ENCODE measurements at regions of chr2 and their contacts with region 1.

Region 1: GRCh38 chr2:231900486-231900942 is 25.7 kb downstream of the NPPC start:
- DNase-seq: peak; percentile 77 to 81
- ATAC-seq: peak; percentile 74 to 88 (median 86)
- H3K4me3 ChIP-seq: no peak overlapping the region
- H3K27ac ChIP-seq: no peak overlapping the region
- H3K4me1 ChIP-seq: no peaks in the 10 kb centered on the region
- H3K27me3 ChIP-seq: peaks cover 0 to 3% (median 0%) of the 10 kb centered on the region in 3 donors
- CTCF ChIP-seq: peak; percentile 67

Region 2: GRCh38 chr2:232142049-232142448 is 241.5 kb after region 1 on chr2:
- intact Hi-C with region 1: loop called in 1 of 2 experiments (anchors 5 kb)
- DNase-seq: no peak
- ATAC-seq: peak; percentile 52 to 75 (median 54)
- H3K4me3 ChIP-seq: no peak overlapping the region
- H3K27ac ChIP-seq: no peak overlapping the region
- H3K4me1 ChIP-seq: peaks cover 5% of the 10 kb centered on the region
- H3K27me3 ChIP-seq: no peaks in the 10 kb centered on the region
- CTCF ChIP-seq: peak; percentile 67

Region 3: DNA sequence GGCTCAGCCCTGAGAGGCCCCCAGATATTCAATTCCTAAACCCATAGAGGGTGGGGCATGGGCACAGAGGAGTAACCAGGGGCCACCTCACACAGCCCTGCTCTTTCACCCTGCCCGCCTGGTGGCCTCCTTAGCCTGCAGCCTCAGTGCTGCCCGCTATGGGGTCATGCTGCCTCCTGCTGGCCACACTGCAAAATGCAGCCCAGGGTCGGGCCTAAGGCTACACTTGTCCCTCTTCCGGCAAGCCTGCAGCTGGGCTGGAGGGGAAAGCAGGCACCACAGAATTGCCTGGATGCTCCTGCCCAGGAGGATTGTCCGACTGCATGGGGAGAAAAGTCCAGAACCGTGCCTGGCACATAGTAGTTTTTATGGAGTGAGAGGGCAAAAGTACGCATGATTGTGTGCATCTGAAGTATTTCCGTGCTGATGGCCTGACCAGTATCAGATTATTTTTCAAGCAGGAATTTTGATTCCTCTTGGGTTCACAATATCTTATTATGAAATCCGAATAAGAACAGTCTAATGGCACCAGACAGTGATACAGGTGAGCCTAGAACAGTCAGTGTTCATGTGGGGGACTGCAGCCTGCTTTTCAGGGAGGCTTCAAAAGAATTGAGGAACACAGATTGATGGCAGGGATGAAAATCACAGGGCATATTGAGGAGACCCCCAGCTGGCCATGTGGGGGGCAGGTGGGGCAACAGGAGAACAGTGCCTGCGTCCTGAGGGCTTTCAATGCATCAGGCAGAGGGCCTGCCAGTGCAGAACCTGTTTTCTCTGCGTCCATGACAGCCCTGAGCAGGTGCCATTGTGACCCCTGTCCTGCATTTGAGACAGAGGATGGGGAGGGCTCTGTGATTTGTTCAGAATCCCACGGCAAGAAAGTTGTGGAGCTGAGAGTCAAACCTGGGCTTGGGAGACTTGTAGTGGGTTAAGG is 426.9 kb after region 1 on chr2:
- intact Hi-C with region 1: loop called in 1 of 2 experiments (anchors 5 kb)
- DNase-seq: peak; percentile 77 to 85
- ATAC-seq: peak; percentile 55 to 77 (median 75)
- H3K4me3 ChIP-seq: no peak overlapping the region
- H3K27ac ChIP-seq: no peak overlapping the region
- H3K4me1 ChIP-seq: no peaks in the 10 kb centered on the region
- H3K27me3 ChIP-seq: no peaks in the 10 kb centered on the region
- CTCF ChIP-seq: peak; percentile 73

Region 4: GRCh38 chr2:232444409-232445148 is 544.1 kb after region 1 on chr2:
- intact Hi-C with region 1: loop called in 1 of 2 experiments (anchors 5 kb)
- DNase-seq: peak; percentile 50 to 68
- ATAC-seq: peak in 3 of 4 donors; percentile 48 to 56 (median 55)
- H3K4me3 ChIP-seq: no peak overlapping the region
- H3K27ac ChIP-seq: peak overlapping the region; percentile 30
- H3K4me1 ChIP-seq: peaks cover 7% of the 10 kb centered on the region
- H3K27me3 ChIP-seq: no peaks in the 10 kb centered on the region
- CTCF ChIP-seq: peak; percentile 40